ENCODE measurements at regions of chr1 and their contacts with region 1.

Region 1: GRCh38 chr1:28886731-28887418 is 27.5 kb upstream of the EPB41 start:
- DNase-seq: peak; percentile 91
- H3K4me3 Mint-ChIP-seq: peak overlapping the region; percentile 88
- H3K27ac Mint-ChIP-seq: peak overlapping the region; percentile 93
- H3K4me1 Mint-ChIP-seq: peaks cover 56% of the 10 kb centered on the region
- H3K27me3 Mint-ChIP-seq: no peaks in the 10 kb centered on the region

Region 2: DNA sequence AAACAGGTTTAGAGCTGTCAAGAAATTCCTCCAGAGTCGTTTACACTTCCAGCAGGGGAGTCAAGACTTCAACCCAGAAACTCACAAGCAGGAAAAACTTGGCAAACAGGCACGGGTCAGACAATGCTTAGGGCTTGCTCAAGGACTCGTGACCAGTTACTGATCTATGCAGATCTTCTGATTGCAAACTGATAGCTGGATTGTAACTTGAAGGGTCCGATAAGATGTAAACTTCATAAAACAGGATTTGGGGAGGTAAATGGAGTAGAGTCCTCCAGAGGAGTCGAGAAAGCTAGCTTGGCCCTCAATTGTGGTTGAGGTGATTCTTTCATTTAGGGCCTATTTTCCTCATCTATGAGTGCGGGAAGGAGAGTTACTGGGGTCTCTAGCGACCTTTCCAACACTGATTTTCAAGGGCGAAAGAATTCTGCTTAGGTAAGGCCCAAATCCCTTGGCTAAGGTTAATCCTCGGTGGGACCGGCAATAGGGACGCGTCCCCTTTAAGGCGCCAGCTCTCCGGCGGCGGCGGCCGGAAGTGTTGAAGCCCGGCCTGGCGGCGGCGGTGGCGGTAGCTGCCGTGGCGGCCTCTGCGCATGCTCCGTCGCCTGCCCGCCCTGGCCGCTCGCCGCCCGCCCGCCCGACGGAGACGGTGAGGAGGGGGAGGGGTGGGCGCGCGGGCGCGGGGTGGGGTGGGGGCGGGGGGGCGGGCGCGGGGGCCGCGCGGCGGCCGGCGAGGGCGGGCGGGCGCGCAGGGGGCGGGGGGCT is 218.5 kb before region 1 on chr1 and contains the start of gene GMEB1:
- intact Hi-C with region 1: loop called (anchors 5 kb)
- DNase-seq: peak; percentile 87
- H3K4me3 Mint-ChIP-seq: peak within 1 kb of the TSS; percentile 90
- H3K27ac Mint-ChIP-seq: peak within 1 kb of the TSS; percentile 98
- H3K4me1 Mint-ChIP-seq: peaks cover 11% of the 10 kb centered on the region
- H3K27me3 Mint-ChIP-seq: no peaks in the 10 kb centered on the region
- total RNA-seq, gene GMEB1: 27.2 and 30.3 TPM in 2 replicates

Region 3: GRCh38 chr1:28926629-28927265 is 39.9 kb after region 1 on chr1:
- intact Hi-C with region 1: loop called (anchors 1 kb)
- DNase-seq: peak; percentile 57
- H3K4me3 Mint-ChIP-seq: peak overlapping the region; percentile 59
- H3K27ac Mint-ChIP-seq: peak overlapping the region; percentile 84
- H3K4me1 Mint-ChIP-seq: peaks cover 45% of the 10 kb centered on the region
- H3K27me3 Mint-ChIP-seq: no peaks in the 10 kb centered on the region

Region 4: GRCh38 chr1:29062157-29062942 is 175.5 kb after region 1 on chr1:
- intact Hi-C with region 1: loop called (anchors 1 kb)
- DNase-seq: no peak
- H3K4me3 Mint-ChIP-seq: peak overlapping the region; percentile 46
- H3K27ac Mint-ChIP-seq: peak overlapping the region; percentile 97
- H3K4me1 Mint-ChIP-seq: peaks cover 23% of the 10 kb centered on the region
- H3K27me3 Mint-ChIP-seq: no peaks in the 10 kb centered on the region

Region 5: DNA sequence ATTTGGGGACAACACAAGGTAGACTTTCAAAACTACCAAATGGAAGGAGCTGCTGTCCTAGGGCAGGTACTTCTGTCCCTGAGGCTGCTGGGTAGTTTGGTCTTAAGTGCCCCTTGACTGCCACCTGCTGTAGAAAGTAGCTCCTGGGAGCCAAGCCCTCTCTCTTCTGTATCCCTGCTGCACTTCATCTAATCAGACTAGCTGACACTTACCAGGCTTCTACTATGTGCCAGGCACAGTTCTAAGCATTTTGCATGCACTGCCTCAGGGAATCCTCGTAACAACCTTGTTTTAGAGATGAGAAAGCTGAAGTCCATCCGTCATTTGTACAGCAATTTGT is 310.7 kb after region 1 on chr1:
- intact Hi-C with region 1: loop called (anchors 1 kb)
- DNase-seq: peak; percentile 31
- H3K4me3 Mint-ChIP-seq: no peak overlapping the region
- H3K27ac Mint-ChIP-seq: no peak overlapping the region
- H3K4me1 Mint-ChIP-seq: peaks cover 11% of the 10 kb centered on the region
- H3K27me3 Mint-ChIP-seq: no peaks in the 10 kb centered on the region

Region 6: DNA sequence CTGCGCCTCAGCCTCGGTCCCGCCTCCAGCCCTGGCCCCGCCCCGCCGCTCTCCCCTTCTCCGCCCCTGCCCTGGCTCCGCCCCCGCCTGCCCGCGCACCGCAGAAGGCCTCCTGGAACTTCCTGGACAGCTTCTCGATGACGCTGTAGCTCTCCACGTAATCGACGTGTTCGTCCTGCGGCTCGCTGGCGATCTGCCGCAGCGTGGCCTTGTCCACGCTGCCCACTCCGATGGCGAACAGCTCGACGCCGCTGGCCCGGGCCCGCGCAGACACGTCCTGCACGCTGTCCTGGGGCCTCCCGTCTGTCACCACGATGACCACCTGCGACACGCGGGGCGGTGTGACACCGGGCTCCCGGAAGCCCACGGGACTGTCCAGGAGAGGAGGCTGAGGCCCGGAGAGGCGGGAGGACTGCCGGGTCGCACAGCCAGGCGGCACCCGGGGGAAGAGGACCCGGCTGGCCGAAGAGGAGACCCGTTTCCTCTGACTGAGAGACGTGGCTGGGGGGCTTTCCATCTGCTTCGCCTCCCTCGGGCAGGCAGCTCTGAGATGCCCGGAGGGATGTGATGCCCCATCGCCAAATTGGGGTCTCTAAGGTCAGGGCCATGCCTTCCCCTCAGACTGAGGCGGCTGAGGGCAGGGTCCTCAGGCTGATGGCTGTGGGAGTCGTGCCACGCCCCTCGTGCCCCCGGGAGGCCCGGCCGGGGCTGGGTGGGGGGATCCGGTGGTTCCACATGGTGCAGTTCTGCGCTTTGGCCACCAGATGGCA is 1831.9 kb after region 1 on chr1:
- intact Hi-C with region 1: loop called (anchors 2 kb)
- DNase-seq: peak; percentile 95
- H3K4me3 Mint-ChIP-seq: peak overlapping the region; percentile 89
- H3K27ac Mint-ChIP-seq: peak overlapping the region; percentile 93
- H3K4me1 Mint-ChIP-seq: peaks cover 20% of the 10 kb centered on the region
- H3K27me3 Mint-ChIP-seq: peaks cover 3% of the 10 kb centered on the region